ENCODE measurements at regions of chr1 and their contacts with region 1.

Region 1: DNA sequence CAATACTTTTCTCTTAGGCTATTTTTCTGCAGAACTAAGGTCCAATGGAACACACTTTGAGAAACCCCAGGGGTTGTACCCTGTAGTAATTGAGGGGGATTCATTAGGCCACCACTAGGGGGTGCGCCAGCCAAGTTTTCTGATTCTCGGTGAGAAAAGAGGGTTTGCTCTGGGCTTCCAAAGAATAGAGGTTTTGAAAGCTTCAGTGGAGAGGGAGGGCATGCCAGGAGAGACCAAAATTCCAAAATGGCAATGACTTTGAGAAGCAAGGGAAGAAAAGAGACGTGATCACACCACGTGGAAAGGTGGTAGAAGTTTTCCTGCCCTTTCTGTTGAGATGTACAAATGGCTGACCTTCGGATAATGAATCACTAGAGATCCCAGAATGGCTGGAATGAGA is 323.3 kb downstream of the RPS6KC1 start:
- DNase-seq: peak; percentile 41 to 68
- ATAC-seq: peak; percentile 63 to 85 (median 71)
- H3K4me3 ChIP-seq: no peak overlapping the region
- H3K27ac ChIP-seq: no peak overlapping the region
- H3K4me1 ChIP-seq: no peaks in the 10 kb centered on the region
- H3K27me3 ChIP-seq: no peaks in the 10 kb centered on the region
- CTCF ChIP-seq: peak; percentile 85

Region 2: DNA sequence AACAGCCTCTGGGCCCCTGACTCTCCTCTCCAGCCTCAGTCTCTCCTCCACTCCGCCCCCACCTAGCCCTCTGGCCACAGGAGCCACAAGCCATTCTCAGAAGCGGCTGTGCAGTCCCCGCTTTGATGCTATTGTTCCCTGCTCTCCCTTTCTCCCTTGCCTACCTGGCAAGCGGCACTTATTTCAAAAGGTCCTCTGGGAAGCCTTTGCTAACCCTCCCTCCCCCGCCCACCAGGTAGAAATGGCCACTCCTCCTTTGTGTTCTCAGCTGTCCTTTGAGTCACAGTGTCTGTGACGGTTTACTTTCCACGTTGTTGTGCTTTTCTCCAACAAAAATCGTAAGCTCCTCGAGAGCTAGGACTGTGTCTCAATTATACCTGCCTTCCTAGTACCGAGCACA is 275.0 kb after region 1 on chr1:
- intact Hi-C with region 1: no loop called
- DNase-seq: no peak
- ATAC-seq: no peak
- H3K4me3 ChIP-seq: no peak overlapping the region
- H3K27ac ChIP-seq: no peak overlapping the region
- H3K4me1 ChIP-seq: no peaks in the 10 kb centered on the region
- H3K27me3 ChIP-seq: no peaks in the 10 kb centered on the region
- CTCF ChIP-seq: no peak

Region 3: GRCh38 chr1:214123061-214123784 is 748.9 kb after region 1 on chr1:
- intact Hi-C with region 1: loop called (anchors 1 to 5 kb)
- DNase-seq: no peak
- ATAC-seq: peak; percentile 70 to 92 (median 82)
- H3K4me3 ChIP-seq: no peak overlapping the region
- H3K27ac ChIP-seq: no peak overlapping the region
- H3K4me1 ChIP-seq: no peaks in the 10 kb centered on the region
- H3K27me3 ChIP-seq: no peaks in the 10 kb centered on the region
- CTCF ChIP-seq: peak; percentile 60